Posterior vena cava (tissue), 2 donors: ENCODE measurements at regions of chr4 and their contacts with region 1.

Region 1: GRCh38 chr4:10321931-10322330 is 135.3 kb downstream of the ZNF518B start:
- DNase-seq: no peak

Region 2: DNA sequence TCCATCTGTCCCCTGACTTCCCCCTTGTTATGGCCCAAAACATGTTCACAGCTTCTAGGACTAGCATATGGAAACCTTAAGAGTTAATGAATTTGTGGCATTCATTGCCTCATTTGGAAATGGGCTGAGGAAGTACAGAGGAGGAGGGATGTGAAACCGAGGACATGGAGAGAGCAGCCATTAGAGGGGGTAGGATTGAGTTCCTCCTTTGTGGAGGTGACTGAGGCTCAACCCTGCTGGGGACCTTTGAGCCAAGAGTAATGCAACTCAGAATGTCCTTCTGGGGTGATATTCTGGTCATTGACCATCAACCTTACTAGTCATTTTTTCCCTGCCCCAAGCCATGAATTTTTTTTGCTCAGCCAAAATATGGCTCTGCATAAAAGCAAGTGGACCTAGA is 25.9 kb after region 1 on chr4:
- intact Hi-C with region 1: loop called in 1 of 2 experiments (anchors 2 kb)
- DNase-seq: no peak